Prostate gland (tissue), 2 donors: ENCODE measurements at regions of chr1 and their contacts with region 1.

Region 1: DNA sequence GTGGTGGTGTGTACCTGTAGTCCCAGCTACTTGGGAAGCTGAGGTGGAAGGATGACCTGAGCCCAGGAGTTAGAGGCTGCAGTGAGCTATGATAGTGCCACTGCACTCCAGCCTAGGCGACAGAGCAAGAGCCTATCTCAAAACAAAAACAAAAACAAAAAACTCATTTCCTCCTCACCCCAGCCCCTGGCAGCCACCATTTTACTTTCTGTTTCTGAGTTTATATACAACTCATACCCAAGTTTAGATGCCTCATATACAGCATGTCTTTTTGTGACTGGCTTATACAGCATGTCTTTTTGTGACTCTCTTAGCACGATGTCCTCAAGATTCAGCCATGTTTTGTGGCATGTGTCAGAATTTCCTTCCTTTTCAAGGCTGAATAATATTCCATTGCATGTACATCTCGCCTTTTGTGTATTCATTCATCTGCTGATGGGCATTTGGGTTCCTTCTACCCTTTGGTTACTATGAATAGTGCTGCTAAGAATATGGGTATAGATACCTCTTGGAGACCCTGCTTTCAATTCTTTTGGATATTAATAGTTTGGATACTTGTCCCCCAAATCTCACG is 14.7 kb downstream of the COA7 start:
- DNase-seq: no peak
- H3K4me3 ChIP-seq: no peak overlapping the region
- H3K27ac ChIP-seq: no peak overlapping the region
- H3K4me1 ChIP-seq: no peaks in the 10 kb centered on the region
- H3K27me3 ChIP-seq: no peaks in the 10 kb centered on the region
- CTCF ChIP-seq: no peak
- POLR2A ChIP-seq: no peak

Region 2: DNA sequence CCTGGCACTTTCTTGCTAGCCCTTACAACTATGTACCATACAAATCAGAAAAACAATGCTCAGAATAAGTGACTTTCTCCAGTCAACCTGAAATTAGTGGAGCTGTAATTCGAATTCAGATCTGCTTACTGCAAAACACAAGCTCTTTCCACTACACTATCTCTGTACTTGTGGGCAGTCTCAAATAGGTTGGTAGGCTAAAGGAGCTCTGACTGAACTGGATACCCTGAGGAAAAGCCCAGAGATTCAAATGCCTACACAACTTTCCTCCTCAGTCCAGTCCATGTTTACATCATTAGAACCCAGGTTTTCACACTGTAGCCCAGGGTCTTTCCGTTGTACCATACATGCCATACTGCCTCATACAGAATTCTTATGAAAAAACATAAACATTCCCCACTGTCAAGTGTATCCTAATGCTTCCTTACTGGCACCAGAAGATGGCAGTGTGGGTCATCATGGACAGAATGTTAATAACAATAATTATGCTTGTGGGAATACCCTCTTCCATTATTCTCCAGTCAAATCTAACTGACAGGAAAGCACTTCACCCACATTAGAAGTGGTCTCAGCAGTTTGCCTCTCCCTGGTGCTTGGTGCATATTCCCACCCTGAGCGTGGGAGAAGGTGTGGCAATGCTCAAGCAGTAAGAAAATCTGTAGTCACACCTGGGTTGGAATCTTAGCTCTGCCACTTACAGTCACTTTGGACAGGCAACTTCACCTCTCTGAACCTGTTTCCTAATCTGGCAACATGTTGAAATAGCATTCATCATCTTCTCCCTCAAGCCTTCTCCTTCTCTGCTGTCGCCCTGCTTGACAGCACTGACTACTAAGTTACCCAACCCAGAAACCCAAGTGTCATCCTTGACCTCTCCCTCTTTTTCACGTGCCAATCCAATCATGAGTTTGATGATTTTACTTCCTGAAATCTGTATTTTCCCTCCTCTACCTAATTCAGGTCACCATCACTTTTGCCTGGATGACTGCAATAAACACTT is 556.0 kb before region 1 on chr1:
- intact Hi-C with region 1: loop called (anchors 10 kb)
- DNase-seq: peak; percentile 41
- H3K4me3 ChIP-seq: no peak overlapping the region
- H3K27ac ChIP-seq: no peak overlapping the region
- H3K4me1 ChIP-seq: no peaks in the 10 kb centered on the region
- H3K27me3 ChIP-seq: no peaks in the 10 kb centered on the region
- CTCF ChIP-seq: peak in 3 of 4 experiments; percentile 46 to 70 (median 66)
- POLR2A ChIP-seq: no peak

Region 3: GRCh38 chr1:52365746-52366516 is 317.5 kb before region 1 on chr1 and contains the start of gene CC2D1B:
- intact Hi-C with region 1: loop called (anchors 5 kb)
- DNase-seq: peak; percentile 99
- H3K4me3 ChIP-seq: peak within 1 kb of the TSS; percentile 91 to 97
- H3K27ac ChIP-seq: peak within 1 kb of the TSS; percentile 94
- H3K4me1 ChIP-seq: no peaks in the 10 kb centered on the region
- H3K27me3 ChIP-seq: no peaks in the 10 kb centered on the region
- CTCF ChIP-seq: peak; percentile 24 to 86 (median 48)
- POLR2A ChIP-seq: peak; percentile 90
- total RNA-seq, gene CC2D1B: 24.2 to 43.9 TPM

Region 4: GRCh38 chr1:52404116-52404986 is 279.1 kb before region 1 on chr1 and contains the starts of genes ORC1 and PRPF38A:
- intact Hi-C with region 1: loop called (anchors 10 kb)
- DNase-seq: peak; percentile 99
- H3K4me3 ChIP-seq: peak within 1 kb of the TSS; percentile 57 to 65
- H3K27ac ChIP-seq: peak within 1 kb of the TSS; percentile 83 to 85
- H3K4me1 ChIP-seq: no peaks in the 10 kb centered on the region
- H3K27me3 ChIP-seq: no peaks in the 10 kb centered on the region
- CTCF ChIP-seq: peak in 2 of 4 experiments; percentile 53 to 56
- POLR2A ChIP-seq: peak; percentile 50
- total RNA-seq, gene ORC1: 2.2 to 3.3 TPM
- total RNA-seq, gene PRPF38A: 15.3 to 24.8 TPM